Motor neuron (in vitro differentiated cells): ENCODE measurements at regions of chr6 and their contacts with region 1.

Region 1: GRCh38 chr6:45421709-45422502 is 44.2 kb upstream of the SUPT3H start:
- ATAC-seq: peak; percentile 68 to 82 (median 81)
- H3K4me3 ChIP-seq: peak overlapping the region; percentile 37 to 59 (median 48)
- H3K27ac ChIP-seq: no peak overlapping the region
- H3K4me1 ChIP-seq: peaks cover 18 to 23% of the 10 kb centered on the region in 2 donors

Region 2: DNA sequence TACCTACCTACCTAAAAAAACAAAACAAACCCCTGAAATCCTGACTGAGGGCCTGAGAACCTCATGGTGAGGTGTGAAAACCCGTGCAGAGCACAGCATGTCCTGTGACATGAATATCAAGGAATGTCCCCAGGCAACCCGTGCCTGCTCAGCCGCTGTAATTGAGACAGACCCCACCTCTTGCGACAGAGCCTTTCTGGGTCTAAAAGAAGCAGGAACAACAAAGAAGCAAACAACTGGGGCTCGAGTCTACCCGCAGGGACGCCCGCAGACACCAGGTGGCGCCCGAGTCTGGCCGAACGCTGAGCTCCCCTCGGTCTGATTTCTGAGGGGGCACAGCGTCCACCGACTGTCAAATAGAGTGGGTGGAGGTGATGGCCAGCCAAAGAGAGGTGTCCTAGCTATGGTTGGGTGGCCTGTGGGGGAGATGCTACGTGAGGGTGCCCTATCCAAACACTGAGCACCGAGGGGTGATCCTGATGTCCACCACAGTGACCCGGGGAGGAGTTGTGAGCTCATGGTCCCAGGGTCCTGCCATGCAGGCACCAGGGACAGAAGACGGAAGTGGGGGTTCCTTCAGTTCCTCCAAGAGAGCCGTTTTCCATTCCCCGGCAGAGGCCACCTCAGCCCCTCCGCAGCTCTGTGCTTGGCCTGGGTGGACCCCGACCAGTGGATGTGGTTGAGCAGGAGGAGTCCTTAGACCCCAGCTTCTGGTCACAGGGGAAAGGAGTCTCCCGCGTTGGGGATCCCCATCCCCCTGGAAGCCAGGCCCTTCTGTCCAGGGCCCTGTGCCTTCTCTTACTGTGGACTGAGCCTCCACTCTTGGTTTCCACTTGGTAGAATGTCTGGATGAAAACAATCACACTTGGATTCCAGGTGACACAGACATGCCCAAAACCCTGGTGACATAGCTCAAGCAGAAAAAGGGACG is 766.2 kb before region 1 on chr6:
- in situ Hi-C with region 1: loop called in 2 of 9 experiments (anchors 25 kb)
- ATAC-seq: peak; percentile 74 to 96 (median 84)
- H3K4me3 ChIP-seq: no peak overlapping the region
- H3K27ac ChIP-seq: no peak overlapping the region
- H3K4me1 ChIP-seq: peaks cover 0 to 13% of the 10 kb centered on the region in 2 donors